Right lobe of liver (tissue), 6 donors: ENCODE measurements at regions of chr1 and their contacts with region 1.

Region 1: DNA sequence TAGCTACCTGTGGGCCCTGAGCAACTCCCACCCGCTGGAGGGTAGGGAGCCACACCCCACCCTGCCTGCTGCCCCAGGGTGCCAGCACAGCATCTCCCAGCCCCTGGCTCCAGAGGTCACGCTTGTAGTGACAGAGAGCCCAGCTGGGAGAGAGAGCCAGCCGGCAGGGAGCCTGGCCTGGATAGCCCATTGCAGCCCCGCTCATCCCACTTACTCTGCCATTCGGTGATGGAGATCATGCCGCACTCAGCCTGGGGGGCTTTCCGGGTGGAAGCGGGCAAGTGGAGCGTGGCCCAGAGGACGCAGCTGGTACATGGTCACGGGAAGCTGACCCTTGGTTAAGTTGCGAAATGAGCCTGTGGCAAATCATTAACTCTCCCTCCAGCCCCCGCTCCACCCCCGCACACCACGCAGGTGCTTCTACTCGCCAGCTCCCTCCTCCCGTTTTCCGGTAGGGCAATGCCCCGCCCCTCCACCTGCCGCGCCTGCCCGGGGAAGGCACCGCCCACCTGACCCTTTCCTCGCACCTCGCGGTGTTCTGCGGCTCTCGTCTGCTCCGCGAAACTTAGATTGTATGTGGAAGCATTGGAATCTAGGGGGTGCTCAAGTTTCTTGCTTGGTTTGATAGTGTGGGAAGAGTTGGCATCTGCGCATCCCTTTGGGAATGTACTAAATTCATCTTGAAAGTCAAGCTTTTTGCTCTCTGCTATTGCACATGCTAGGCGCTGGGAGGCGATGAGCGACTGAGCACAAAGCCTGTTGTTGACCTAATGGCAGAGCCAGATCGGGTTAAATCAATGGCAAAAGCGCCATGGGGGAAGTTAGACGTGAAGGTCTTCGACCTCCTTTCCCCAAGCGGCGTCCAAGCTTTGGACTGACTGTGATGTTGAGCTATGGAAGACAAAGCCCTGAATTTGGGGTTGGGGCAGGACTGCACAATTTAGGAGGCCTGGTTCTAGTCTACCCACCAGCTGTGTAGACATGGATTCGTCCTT is at the start of gene GOLT1A:
- DNase-seq: peak; percentile 91 to 95 (median 94)
- ATAC-seq: peak; percentile 94 to 97 (median 95)
- H3K4me3 ChIP-seq: peak within 1 kb of the TSS; percentile 53 to 73 (median 67)
- H3K27ac ChIP-seq: peak within 1 kb of the TSS; percentile 59 to 74 (median 74)
- H3K4me1 ChIP-seq: peaks cover 0 to 31% (median 8%) of the 10 kb centered on the region in 4 donors
- H3K27me3 ChIP-seq: no peaks in the 10 kb centered on the region
- CTCF ChIP-seq: peak; percentile 71 to 86 (median 82)
- POLR2A ChIP-seq: peak; percentile 84
- total RNA-seq, gene GOLT1A: 49.4 to 103 (median 74.5) TPM

Region 2: GRCh38 chr1:204151552-204152309 is 62.2 kb before region 1 on chr1 and contains the start of gene ETNK2:
- intact Hi-C with region 1: no loop called
- DNase-seq: peak; percentile 58 to 90 (median 87)
- ATAC-seq: peak; percentile 54 to 72 (median 61)
- H3K4me3 ChIP-seq: peak within 1 kb of the TSS; percentile 70 to 98 (median 87)
- H3K27ac ChIP-seq: peak within 1 kb of the TSS in 2 of 3 donors; percentile 86 to 89
- H3K4me1 ChIP-seq: peaks cover 0 to 18% (median 3%) of the 10 kb centered on the region in 4 donors
- H3K27me3 ChIP-seq: no peaks in the 10 kb centered on the region
- CTCF ChIP-seq: no peak
- POLR2A ChIP-seq: peak; percentile 34
- total RNA-seq, gene ETNK2: 30.9 to 231 (median 98.9) TPM

Region 3: DNA sequence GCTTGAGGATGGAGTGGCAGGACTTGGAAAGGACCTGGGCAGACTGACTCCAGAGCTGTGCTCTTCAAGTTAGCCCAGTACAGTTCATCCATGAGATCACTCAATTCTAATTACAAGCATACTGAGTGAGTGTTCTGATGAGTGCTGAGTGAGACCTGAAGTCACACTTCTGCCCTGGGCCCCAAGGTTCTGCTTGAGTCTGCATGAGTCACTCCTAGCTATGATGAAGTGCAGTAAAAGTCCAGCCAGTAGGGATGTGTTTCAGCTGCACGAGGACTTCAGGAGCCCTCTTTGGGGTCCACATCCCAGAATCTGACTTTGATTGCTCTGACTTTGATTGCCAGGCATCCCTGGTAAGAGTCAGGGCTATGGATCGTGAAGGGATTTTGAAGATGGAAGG is 109.9 kb after region 1 on chr1:
- intact Hi-C with region 1: no loop called
- DNase-seq: no peak
- ATAC-seq: no peak
- H3K4me3 ChIP-seq: no peak overlapping the region
- H3K27ac ChIP-seq: no peak overlapping the region
- H3K4me1 ChIP-seq: no peaks in the 10 kb centered on the region
- H3K27me3 ChIP-seq: no peaks in the 10 kb centered on the region
- CTCF ChIP-seq: no peak
- POLR2A ChIP-seq: no peak

Region 4: DNA sequence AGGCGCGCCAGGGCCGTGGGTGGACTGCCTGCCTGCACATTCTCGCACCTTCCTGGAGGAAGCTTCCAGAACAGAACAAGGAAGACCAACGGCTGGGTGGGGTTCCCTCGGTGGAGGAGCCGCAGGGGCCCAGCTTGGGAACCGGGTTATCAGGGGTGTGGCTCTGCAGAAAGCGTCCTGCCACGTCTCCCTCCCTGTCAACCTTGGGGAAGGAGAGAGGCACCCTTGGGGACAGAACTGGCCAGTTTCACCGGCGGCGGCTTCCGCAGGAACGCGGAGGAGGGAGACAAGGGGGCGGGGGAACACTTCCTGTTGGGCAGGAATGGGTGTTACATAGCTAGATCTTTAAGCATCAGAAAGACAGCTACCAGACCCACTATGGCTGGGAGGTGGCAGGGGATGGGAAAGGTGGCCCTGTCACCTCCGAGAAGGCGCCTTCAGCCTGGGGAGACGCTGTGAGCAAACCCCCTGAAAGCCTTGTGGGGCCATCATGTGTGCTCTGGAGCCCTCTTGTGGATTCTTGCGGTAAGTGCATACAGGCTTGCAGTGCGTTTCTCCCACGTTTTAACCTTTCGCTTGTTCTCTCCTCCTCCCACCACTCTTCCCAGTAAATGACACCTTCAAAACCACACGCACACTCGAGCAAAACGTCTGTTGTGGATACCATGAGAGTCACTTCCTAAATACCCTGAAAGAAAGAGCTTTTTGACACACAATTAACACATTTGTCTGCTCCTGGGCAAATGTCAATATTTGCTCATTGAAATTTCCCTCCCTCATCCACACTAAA is 149.6 kb after region 1 on chr1:
- intact Hi-C with region 1: loop called in 1 of 2 experiments (anchors 10 kb)
- DNase-seq: peak; percentile 62 to 67 (median 66)
- ATAC-seq: peak; percentile 88 to 97 (median 94)
- H3K4me3 ChIP-seq: peak overlapping the region; percentile 19 to 46 (median 42)
- H3K27ac ChIP-seq: peak overlapping the region; percentile 55 to 76 (median 61)
- H3K4me1 ChIP-seq: peaks cover 0 to 8% (median 2%) of the 10 kb centered on the region in 4 donors
- H3K27me3 ChIP-seq: no peaks in the 10 kb centered on the region
- CTCF ChIP-seq: peak; percentile 95 to 97 (median 96)
- POLR2A ChIP-seq: no peak